ENCODE measurements at regions of chr1 and their contacts with region 1.

Region 1: DNA sequence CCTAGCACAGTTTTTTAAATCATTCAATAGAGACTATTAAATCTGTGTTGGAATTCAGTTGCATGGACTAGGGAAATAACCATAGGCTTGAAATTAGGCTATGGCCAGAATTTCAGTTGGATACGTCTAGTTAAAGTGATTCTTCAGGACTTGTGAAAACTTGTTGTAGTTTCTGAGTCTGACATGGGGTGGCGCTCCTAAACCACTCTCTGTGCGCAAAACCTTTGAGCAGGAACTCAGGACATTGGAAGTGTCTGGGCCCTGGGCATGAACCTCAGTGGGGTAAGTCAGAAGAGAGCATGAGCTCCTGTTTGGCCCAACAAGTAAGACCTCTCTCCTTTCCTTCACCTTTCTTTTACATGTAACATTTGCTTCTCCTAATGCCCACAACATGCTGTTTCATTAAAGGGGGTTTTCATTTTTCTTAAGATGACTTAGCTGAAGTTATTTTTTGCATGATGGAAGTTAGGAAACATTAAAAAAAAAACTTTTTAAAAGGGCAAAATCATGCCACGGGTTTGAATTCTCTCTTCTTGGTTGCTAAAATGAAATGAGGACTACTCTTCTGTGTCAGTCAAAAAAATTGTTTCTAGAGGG is 17.1 kb upstream of the CCDC190 start:
- DNase-seq: peak; percentile 87
- H3K4me3 ChIP-seq: no peak overlapping the region
- H3K27ac ChIP-seq: no peak overlapping the region
- H3K4me1 ChIP-seq: no peaks in the 10 kb centered on the region
- H3K27me3 ChIP-seq: no peaks in the 10 kb centered on the region
- CTCF ChIP-seq: peak; percentile 91

Region 2: DNA sequence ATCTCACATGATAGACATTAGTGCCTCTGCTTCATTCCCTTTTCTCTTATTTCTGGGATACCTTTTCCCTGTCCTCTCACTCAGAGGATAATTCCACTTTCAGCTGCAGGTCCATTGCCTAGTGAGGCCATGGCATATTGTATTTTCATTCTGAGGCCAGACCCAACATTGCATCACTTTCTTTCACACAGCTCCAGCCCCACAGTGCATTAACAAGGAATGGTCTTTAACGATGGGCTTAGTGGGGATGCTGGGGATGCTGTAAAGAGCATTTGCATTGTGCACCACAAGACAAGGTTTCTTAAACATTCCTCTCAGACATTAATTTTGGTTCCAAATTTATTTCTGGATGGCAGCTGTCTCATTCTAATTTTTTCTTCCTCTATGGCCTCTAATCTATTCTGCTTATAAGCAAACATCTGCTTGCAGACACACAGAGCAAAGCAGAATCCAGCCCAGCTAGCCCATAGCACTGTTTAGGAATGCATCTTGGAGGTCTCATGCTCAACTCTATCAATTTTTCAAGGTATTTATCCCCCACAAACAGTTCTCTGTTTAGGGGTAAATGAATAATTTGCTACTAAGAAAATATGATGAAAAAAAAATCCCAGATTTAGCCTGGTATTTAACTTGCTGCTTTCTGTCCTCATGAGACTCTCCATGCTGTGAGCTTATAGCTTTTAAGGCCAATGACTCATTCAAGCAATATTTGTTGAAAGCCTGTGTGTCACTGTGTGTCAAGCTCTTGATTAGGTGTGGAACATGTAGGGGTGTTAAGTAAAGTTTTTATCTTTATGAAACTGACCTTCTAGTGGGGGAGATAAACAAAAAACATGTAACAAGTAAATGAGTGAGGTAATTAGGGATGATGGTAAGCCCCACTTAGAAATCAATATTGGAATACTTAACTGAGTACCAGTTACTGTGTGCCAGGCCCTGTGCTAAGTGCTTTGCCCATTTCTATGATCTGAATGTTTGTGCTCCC is 27.4 kb after region 1 on chr1:
- CTCF ChIA-PET with region 1: no interaction called
- POLR2A ChIA-PET with region 1: no interaction called
- intact Hi-C with region 1: no loop called
- DNase-seq: peak; percentile 74
- H3K4me3 ChIP-seq: no peak overlapping the region
- H3K27ac ChIP-seq: no peak overlapping the region
- H3K4me1 ChIP-seq: peaks cover 2% of the 10 kb centered on the region
- H3K27me3 ChIP-seq: no peaks in the 10 kb centered on the region
- CTCF ChIP-seq: no peak

Region 3: DNA sequence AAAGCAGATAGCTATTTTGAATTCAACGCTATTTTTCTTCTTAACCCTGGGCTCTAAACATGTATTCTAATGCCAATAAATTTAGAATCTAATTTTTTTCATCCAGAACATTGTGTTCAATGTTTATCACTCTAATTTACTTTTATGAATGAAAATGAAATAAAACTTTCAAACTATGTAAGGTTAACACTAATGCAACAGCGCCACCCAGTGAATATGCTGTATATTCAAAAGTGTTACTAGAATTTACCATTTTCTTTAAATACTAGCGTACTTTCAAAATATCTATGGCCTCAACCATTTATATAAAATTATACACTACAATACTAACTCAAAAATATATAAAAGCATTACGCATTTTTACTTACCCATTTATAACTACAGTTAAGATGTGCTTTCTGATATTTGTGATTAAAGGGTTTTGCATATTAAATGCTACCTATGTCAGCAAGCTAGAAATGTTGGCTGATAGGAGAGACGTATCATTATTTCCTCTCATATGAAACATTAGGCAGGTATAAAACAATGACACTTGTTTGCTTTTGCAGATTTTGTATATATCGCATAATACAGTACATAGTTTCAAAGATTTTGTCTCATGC is 437.8 kb after region 1 on chr1:
- CTCF ChIA-PET with region 1: interaction called, 4 read pairs
- POLR2A ChIA-PET with region 1: no interaction called
- intact Hi-C with region 1: loop called (anchors 1 kb)
- DNase-seq: peak; percentile 62
- H3K4me3 ChIP-seq: no peak overlapping the region
- H3K27ac ChIP-seq: no peak overlapping the region
- H3K4me1 ChIP-seq: peaks cover 4% of the 10 kb centered on the region
- H3K27me3 ChIP-seq: no peaks in the 10 kb centered on the region
- CTCF ChIP-seq: peak; percentile 87

Measured in A673 (cell line).